ENCODE measurements at regions of chr4 and their contacts with region 1.

Region 1: GRCh38 chr4:137300776-137301175 is 231.5 kb downstream of the PCDH18 start:
- DNase-seq: no peak
- ATAC-seq: no peak
- H3K4me3 ChIP-seq: no peak overlapping the region
- H3K27ac ChIP-seq: no peak overlapping the region
- H3K4me1 ChIP-seq: no peaks in the 10 kb centered on the region
- H3K27me3 ChIP-seq: no peaks in the 10 kb centered on the region
- CTCF ChIP-seq: no peak
- POLR2A ChIP-seq: no peak

Region 2: GRCh38 chr4:137310593-137311490 is 10.1 kb after region 1 on chr4:
- intact Hi-C with region 1: loop called in 1 of 10 experiments (anchors 2 kb)
- DNase-seq: no peak
- ATAC-seq: peak in 2 of 4 donors; percentile 41 to 83
- H3K4me3 ChIP-seq: no peak overlapping the region
- H3K27ac ChIP-seq: peak overlapping the region in 8 of 12 donors; percentile 4 to 47 (median 16)
- H3K4me1 ChIP-seq: peaks cover 0 to 10% (median 0%) of the 10 kb centered on the region in 12 donors
- H3K27me3 ChIP-seq: no peaks in the 10 kb centered on the region
- CTCF ChIP-seq: no peak
- POLR2A ChIP-seq: no peak

Measured in heart left ventricle (tissue), 16 donors.